ENCODE measurements at regions of chr14 and their contacts with region 1.

Region 1: DNA sequence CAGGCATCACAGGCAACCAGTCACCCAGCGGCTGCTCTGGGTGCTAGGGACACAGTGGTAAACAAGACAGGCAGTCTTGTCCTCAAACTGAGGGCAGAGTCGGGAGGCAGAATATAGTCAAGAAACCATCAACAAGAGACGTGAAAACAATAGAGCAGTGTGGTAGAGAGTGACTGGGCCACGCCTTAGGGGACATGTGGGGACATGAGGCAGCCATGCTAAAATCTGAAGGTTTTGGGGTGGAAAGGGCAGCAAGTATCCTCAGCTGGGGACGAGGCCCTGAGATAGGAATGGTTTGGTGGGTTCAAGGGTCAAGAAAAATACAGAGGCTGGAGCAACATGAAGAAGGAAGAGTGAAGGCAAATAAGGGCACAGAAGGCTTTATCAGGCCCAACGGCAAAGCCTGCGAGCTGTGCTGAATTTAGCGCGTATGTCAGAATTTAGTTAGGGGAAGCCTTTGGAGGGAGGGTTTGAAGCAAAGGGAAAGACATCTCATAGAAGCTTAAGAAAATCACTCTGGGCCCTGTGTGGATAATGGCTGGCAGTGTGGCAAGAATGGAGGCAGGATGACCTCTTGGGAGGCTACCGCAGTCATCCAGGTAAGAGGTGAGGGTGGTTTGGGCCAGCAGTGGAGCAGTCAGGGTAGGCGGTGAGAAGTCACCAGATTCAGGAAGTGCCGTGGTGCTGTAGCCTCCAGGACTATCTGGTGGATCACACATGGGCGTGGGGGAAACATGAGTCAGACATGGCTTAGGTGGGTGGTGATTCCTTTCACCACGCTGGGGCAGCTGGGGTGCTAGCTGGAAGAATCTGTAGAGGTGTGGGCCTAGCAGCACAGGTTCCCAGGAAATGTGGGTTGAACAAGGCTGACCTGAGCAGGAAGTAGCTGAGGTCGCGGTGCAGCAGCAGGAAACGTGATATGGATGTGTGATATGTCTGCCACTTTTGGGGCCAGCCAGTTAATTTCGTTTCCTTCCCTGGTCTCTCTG is 3.0 kb downstream of the EVL start:
- DNase-seq: peak; percentile 72 to 91 (median 76)
- ATAC-seq: peak; percentile 87
- H3K4me3 ChIP-seq: 0 out of 2 replicates have a peak overlapping the region, but pooled peaks have one; percentile 4
- H3K27ac ChIP-seq: peak overlapping the region; percentile 89
- H3K4me1 ChIP-seq: peaks cover 25 to 70% of the 10 kb centered on the region in 2 experiments
- H3K27me3 ChIP-seq: no peaks in the 10 kb centered on the region
- CTCF ChIP-seq: no peak
- EP300 ChIP-seq: peak; percentile 73; the same call in 1 of the 2 replicates
- POLR2A ChIP-seq: peak; percentile 75
- RAD21 ChIP-seq: no peak

Region 2: GRCh38 chr14:99982537-99983250 is 85.6 kb before region 1 on chr14:
- CTCF ChIA-PET with region 1: no interaction called
- POLR2A ChIA-PET with region 1: no interaction called
- in situ Hi-C with region 1: no loop called
- intact Hi-C with region 1: loop called (anchors 5 kb)
- DNase-seq: peak; percentile 57 to 75 (median 64)
- ATAC-seq: peak; percentile 95
- H3K4me3 ChIP-seq: no peak overlapping the region
- H3K27ac ChIP-seq: no peak overlapping the region
- H3K4me1 ChIP-seq: peaks cover 2 to 7% of the 10 kb centered on the region in 2 experiments; a peak in 3 of 5 replicates
- H3K27me3 ChIP-seq: no peaks in the 10 kb centered on the region
- CTCF ChIP-seq: peak; percentile 72 to 80 (median 75)
- EP300 ChIP-seq: no peak
- POLR2A ChIP-seq: no peak
- RAD21 ChIP-seq: peak; percentile 80 to 86

Region 3: GRCh38 chr14:100122481-100123222 is 54.4 kb after region 1 on chr14:
- CTCF ChIA-PET with region 1: no interaction called
- POLR2A ChIA-PET with region 1: interaction called, 3 read pairs
- in situ Hi-C with region 1: loop called (anchors 5 kb)
- intact Hi-C with region 1: no loop called
- DNase-seq: peak in 3 of 4 experiments; percentile 29 to 35 (median 33)
- ATAC-seq: peak; percentile 87
- H3K4me3 ChIP-seq: no peak overlapping the region
- H3K27ac ChIP-seq: no peak overlapping the region
- H3K4me1 ChIP-seq: no peaks in the 10 kb centered on the region; a peak in 1 of 5 replicates
- H3K27me3 ChIP-seq: no peaks in the 10 kb centered on the region
- CTCF ChIP-seq: peak; percentile 43 to 51 (median 48)
- EP300 ChIP-seq: no peak
- POLR2A ChIP-seq: no peak
- RAD21 ChIP-seq: peak; percentile 24 to 46; a peak in 3 of 4 replicates

Region 4: GRCh38 chr14:100239840-100240724 is 171.8 kb after region 1 on chr14:
- CTCF ChIA-PET with region 1: no interaction called
- POLR2A ChIA-PET with region 1: no interaction called
- in situ Hi-C with region 1: no loop called
- intact Hi-C with region 1: loop called (anchors 5 kb)
- DNase-seq: peak; percentile 63 to 85 (median 74)
- ATAC-seq: peak; percentile 53
- H3K4me3 ChIP-seq: peak overlapping the region; percentile 96
- H3K27ac ChIP-seq: peak overlapping the region; percentile 98
- H3K4me1 ChIP-seq: peaks cover 13 to 16% of the 10 kb centered on the region in 2 experiments; a peak in 4 of 5 replicates
- H3K27me3 ChIP-seq: no peaks in the 10 kb centered on the region
- CTCF ChIP-seq: peak in 2 of 3 experiments; percentile 37 to 67; a peak in 4 of 6 replicates
- EP300 ChIP-seq: no peak
- POLR2A ChIP-seq: no peak
- RAD21 ChIP-seq: no peak

Measured in K562 (cell line).